GM12878 (cell line): ENCODE measurements at regions of chr1 and their contacts with region 1.

Region 1: GRCh38 chr1:43073490-43074230 is 98.4 kb downstream of the EBNA1BP2 start:
- DNase-seq: peak; percentile 40
- ATAC-seq: peak; percentile 97
- H3K4me3 ChIP-seq: no peak overlapping the region
- H3K27ac ChIP-seq: no peak overlapping the region
- H3K4me1 ChIP-seq: peaks cover 9% of the 10 kb centered on the region; the same call in 1 of the 2 replicates
- H3K27me3 ChIP-seq: peaks cover 0 to 1% of the 10 kb centered on the region in 2 experiments; a peak in 1 of 4 replicates
- CTCF ChIP-seq: peak; percentile 74 to 90 (median 85)
- EP300 ChIP-seq: no peak
- POLR2A ChIP-seq: no peak
- RAD21 ChIP-seq: peak; percentile 99

Region 2: GRCh38 chr1:42756956-42757891 is 316.4 kb before region 1 on chr1:
- CTCF ChIA-PET with region 1: interaction called, 12 read pairs
- POLR2A ChIA-PET with region 1: no interaction called
- RAD21 ChIA-PET with region 1: interaction called, 3 read pairs
- SMC1A ChIA-PET with region 1: interaction called, 9 read pairs
- in situ Hi-C with region 1: no loop called
- intact Hi-C with region 1: no loop called
- DNase-seq: no peak
- ATAC-seq: peak; percentile 96
- H3K4me3 ChIP-seq: no peak overlapping the region
- H3K27ac ChIP-seq: no peak overlapping the region
- H3K4me1 ChIP-seq: no peaks in the 10 kb centered on the region
- H3K27me3 ChIP-seq: no peaks in the 10 kb centered on the region
- CTCF ChIP-seq: peak; percentile 62 to 76 (median 70)
- EP300 ChIP-seq: no peak
- POLR2A ChIP-seq: no peak
- RAD21 ChIP-seq: peak; percentile 59

Region 3: DNA sequence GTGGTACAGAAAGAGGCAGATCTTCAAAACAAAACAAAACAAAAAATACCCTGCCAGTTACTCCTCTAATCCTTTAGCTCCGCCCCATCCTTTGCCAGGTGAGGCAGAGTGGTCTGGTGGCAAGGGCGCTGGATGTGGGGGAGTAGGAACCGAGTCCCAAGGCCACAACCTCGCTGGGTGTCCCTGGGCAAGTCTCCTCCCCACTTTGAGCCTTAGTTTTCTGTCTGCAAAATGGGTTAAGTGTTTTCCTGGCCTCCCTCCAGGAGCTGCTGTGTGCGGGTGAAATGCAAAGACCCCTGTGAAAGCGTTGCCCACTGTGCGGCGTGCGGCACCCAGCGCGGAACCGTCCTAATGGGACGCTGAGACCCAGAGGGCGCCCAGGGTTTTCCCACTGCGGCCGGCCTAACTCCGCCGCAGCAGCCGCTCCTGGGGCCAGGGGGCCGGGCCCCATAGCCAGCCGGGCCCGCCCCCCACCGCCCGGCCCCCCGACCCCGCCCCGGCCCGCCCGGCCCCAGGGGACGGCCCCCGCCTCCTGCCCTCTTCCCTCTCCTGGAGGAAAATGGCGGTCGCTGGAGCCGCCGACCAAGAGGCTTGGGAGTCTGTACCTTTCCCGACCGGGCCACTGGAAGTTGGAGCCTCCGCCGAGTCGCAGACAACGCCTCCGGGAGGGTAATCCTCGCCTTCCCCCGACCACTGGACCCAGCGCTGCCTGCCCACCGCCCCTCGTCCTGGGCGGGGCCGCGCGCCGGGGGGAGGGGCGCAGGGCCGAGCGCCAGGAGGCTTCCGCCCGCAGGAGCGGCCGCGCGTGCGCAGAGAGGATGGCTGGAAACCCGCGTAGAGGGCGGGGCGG is 256.9 kb before region 1 on chr1 and contains the starts of genes ERMAP and SVBP:
- CTCF ChIA-PET with region 1: interaction called, 10 read pairs
- POLR2A ChIA-PET with region 1: no interaction called
- RAD21 ChIA-PET with region 1: interaction called, 10 read pairs
- SMC1A ChIA-PET with region 1: interaction called, 8 read pairs
- in situ Hi-C with region 1: no loop called
- intact Hi-C with region 1: no loop called
- DNase-seq: peak; percentile 43
- ATAC-seq: peak; percentile 95
- H3K4me3 ChIP-seq: peak within 1 kb of the TSS; percentile 84
- H3K27ac ChIP-seq: peak within 1 kb of the TSS; percentile 87
- H3K4me1 ChIP-seq: peaks cover 4% of the 10 kb centered on the region; the same call in 1 of the 2 replicates
- H3K27me3 ChIP-seq: no peaks in the 10 kb centered on the region
- CTCF ChIP-seq: peak in 1 of 3 experiments; percentile 24; a peak in 2 of 6 replicates
- EP300 ChIP-seq: no peak
- POLR2A ChIP-seq: peak; percentile 90
- RAD21 ChIP-seq: no peak
- polyA plus RNA-seq, gene ERMAP: 1.4 to 2.2 TPM
- polyA plus RNA-seq, gene SVBP: 19.8 to 29.5 TPM

Region 4: DNA sequence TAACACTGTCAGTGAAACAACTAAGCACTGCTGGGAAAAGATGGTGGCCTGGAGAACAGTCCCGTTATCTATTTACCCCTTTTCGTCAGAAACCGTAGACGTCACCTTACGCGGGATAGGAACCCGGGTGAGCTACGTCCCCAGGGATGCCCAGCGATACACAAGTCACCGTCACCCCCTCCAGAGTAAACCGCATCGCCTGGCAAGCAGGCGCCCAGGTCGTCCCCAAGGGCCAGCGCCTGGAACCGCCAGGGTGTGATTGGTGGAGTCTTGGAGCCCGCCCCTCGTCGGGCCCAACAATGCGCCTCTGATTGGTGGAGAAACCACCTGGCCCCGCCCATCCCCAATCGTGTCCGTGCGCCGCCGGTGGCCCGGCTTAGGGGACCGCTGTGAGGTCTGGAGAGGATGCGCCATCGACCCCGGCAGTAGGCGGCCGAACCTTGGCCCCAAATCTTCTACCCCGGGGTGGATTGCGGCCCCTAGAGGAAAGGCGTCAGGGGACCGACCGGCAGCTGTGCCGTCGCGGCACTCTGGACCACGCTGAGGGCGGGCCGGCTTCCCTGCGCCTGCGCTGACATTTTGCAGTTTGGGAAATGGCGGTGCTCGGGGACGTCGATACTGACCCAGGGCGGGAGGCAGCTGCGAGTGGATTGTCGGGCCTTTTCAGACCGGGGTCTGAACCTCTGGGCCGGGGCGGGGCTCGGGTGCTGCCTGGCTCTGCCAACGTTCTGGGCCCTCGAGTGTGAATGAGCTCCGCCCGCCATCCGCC is 149.4 kb before region 1 on chr1:
- CTCF ChIA-PET with region 1: interaction called, 383 read pairs
- POLR2A ChIA-PET with region 1: interaction called, 21 read pairs
- RAD21 ChIA-PET with region 1: interaction called, 198 read pairs
- SMC1A ChIA-PET with region 1: interaction called, 602 read pairs
- in situ Hi-C with region 1: loop called (anchors 5 kb)
- intact Hi-C with region 1: loop called (anchors 1 kb)
- DNase-seq: peak; percentile 72
- ATAC-seq: peak; percentile 95
- H3K4me3 ChIP-seq: peak overlapping the region; percentile 71
- H3K27ac ChIP-seq: peak overlapping the region; percentile 78
- H3K4me1 ChIP-seq: peaks cover 9% of the 10 kb centered on the region
- H3K27me3 ChIP-seq: no peaks in the 10 kb centered on the region
- CTCF ChIP-seq: peak; percentile 4 to 17 (median 5); a peak in 2 of 6 replicates
- EP300 ChIP-seq: peak in 1 of 2 experiments; percentile 30; a peak in 1 of 4 replicates
- POLR2A ChIP-seq: peak; percentile 87
- RAD21 ChIP-seq: no peak

Region 5: GRCh38 chr1:42952303-42953001 is 121.2 kb before region 1 on chr1:
- CTCF ChIA-PET with region 1: interaction called, 9 read pairs
- POLR2A ChIA-PET with region 1: no interaction called
- RAD21 ChIA-PET with region 1: interaction called, 11 read pairs
- SMC1A ChIA-PET with region 1: interaction called, 44 read pairs
- in situ Hi-C with region 1: no loop called
- intact Hi-C with region 1: no loop called
- DNase-seq: no peak
- ATAC-seq: peak; percentile 67
- H3K4me3 ChIP-seq: peak overlapping the region; percentile 88
- H3K27ac ChIP-seq: peak overlapping the region; percentile 62
- H3K4me1 ChIP-seq: peaks cover 59% of the 10 kb centered on the region
- H3K27me3 ChIP-seq: no peaks in the 10 kb centered on the region
- CTCF ChIP-seq: no peak
- EP300 ChIP-seq: 0 out of 4 replicates have a peak, but pooled peaks of 1 of the 2 experiments have one; percentile 8
- POLR2A ChIP-seq: 0 out of 2 replicates have a peak, but pooled peaks have one; percentile 16
- RAD21 ChIP-seq: no peak

Region 6: GRCh38 chr1:43152866-43153265 is 79.2 kb after region 1 on chr1:
- CTCF ChIA-PET with region 1: no interaction called
- POLR2A ChIA-PET with region 1: no interaction called
- RAD21 ChIA-PET with region 1: no interaction called
- SMC1A ChIA-PET with region 1: no interaction called
- in situ Hi-C with region 1: no loop called
- intact Hi-C with region 1: no loop called
- DNase-seq: no peak
- ATAC-seq: no peak
- H3K4me3 ChIP-seq: no peak overlapping the region
- H3K27ac ChIP-seq: no peak overlapping the region
- H3K4me1 ChIP-seq: no peaks in the 10 kb centered on the region; the same call in 1 of the 2 replicates
- H3K27me3 ChIP-seq: peaks cover 3 to 4% of the 10 kb centered on the region in 2 experiments
- CTCF ChIP-seq: no peak
- EP300 ChIP-seq: no peak
- POLR2A ChIP-seq: no peak
- RAD21 ChIP-seq: no peak

Region 7: GRCh38 chr1:43414634-43415223 is 341.1 kb after region 1 on chr1:
- CTCF ChIA-PET with region 1: interaction called, 7 read pairs
- POLR2A ChIA-PET with region 1: interaction called, 8 read pairs
- RAD21 ChIA-PET with region 1: interaction called, 7 read pairs
- SMC1A ChIA-PET with region 1: no interaction called
- in situ Hi-C with region 1: no loop called
- intact Hi-C with region 1: loop called (anchors 5 kb)
- DNase-seq: no peak
- ATAC-seq: peak; percentile 90
- H3K4me3 ChIP-seq: no peak overlapping the region
- H3K27ac ChIP-seq: no peak overlapping the region
- H3K4me1 ChIP-seq: peaks cover 7% of the 10 kb centered on the region
- H3K27me3 ChIP-seq: no peaks in the 10 kb centered on the region
- CTCF ChIP-seq: peak; percentile 54 to 57 (median 55)
- EP300 ChIP-seq: no peak
- POLR2A ChIP-seq: no peak
- RAD21 ChIP-seq: peak; percentile 67